ENCODE measurements at regions of chr1 and their contacts with region 1.

Region 1: DNA sequence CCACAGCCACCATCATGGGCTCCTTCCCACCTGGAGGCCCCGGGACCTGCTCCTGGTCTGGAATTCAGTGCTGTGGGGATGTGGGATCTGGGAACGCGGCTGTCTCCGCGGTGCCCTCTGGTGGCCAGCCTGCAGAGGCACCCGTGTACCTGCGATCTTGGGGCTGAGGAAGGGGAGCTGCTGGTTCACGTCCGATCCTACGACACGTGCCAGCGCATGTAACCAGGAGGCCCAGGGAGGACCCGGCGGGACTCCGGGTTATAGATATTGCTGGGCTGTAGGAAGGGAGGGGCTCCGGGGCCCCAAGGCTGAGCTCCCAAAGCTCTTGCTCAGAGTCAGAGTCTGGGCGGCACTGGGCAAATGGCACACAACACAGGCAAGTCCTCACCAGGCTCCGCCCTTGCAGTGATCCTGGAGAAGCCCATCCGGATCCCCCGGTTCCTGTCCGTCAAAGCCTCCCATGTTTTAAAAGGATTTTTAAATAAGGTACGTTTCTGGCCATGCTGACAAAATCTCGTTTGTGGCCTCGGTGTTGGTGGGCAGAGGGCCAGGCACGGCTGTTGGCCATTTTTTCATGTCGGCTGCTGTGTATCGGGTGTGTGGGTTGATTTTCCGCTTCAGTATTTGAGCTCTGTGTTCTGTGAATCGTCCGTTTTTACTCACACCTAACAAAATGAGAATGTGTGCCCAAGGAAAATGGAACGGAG is 20.1 kb downstream of the FAAP20 start:
- DNase-seq: peak; percentile 31
- ATAC-seq: peak; percentile 61
- H3K4me3 Mint-ChIP-seq: no peak overlapping the region
- H3K27ac Mint-ChIP-seq: no peak overlapping the region
- H3K4me1 Mint-ChIP-seq: peaks cover 1% of the 10 kb centered on the region
- H3K27me3 Mint-ChIP-seq: no peaks in the 10 kb centered on the region
- CTCF ChIP-seq: no peak

Region 2: DNA sequence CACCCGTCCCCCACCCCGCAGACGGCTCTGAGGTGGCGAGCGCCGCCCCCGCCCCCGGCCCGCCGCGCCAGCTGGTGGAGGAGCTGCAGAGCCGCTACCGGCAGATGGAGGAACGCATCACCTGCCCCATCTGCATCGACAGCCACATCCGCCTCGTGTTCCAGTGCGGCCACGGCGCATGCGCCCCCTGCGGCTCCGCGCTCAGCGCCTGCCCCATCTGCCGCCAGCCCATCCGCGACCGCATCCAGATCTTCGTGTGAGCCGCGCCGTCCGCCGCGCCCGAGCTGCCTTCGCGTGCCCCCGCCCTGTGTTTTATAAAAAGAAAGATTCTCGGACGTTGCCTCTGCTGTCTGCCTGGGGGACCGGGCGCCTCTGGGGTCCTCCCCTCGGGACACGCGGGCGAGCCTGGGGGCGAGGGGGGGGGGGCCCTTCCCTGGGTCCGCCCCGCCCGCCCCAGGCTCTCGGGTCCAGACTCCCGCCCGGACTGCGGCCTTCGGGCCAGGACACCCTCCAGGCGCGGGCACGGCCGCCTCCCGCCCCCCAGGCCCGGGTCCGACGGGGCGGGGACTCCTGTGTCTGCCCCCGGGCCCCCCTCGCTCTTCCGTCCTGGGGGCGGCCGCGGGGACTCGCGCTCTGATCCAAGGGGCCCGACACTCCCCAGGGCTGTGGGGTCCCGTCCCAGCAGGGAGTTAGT is 544.1 kb before region 1 on chr1:
- CTCF ChIA-PET with region 1: no interaction called
- POLR2A ChIA-PET with region 1: no interaction called
- intact Hi-C with region 1: no loop called
- DNase-seq: peak; percentile 90
- ATAC-seq: peak; percentile 80
- H3K4me3 Mint-ChIP-seq: peak overlapping the region; percentile 82
- H3K27ac Mint-ChIP-seq: peak overlapping the region; percentile 82
- H3K4me1 Mint-ChIP-seq: peaks cover 6% of the 10 kb centered on the region
- H3K27me3 Mint-ChIP-seq: peaks cover 4% of the 10 kb centered on the region
- CTCF ChIP-seq: no peak

Region 3: DNA sequence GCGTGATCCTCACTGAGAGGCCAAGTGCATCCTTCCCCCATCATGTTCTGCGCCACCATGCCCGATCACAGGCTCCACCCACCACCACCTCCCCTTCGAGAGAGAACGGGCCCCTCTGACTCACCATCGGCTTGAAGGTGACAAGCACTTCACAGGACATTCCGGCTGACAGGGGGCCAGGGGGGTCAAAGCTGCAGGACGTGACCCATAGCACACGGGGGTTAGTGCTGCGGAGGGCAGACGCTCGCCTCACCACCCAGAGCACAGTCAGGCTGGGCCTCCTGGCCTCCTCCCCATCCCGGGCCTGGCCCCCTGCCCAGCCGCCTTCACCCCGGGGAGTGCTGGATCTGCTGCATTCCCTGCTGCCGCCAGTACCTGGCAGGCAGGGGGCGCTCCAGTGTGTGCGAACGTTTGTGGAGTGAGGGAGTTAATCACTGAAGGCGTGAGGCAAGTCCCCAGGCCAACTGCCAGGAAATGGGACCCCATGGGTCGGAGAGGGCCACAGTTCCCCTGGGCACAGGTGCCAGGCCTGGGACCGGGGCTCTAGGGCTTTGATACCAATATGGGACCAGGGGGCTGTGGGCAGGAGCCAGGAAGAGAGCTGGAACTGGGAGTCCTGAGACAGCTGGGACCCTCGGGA is 214.5 kb before region 1 on chr1:
- CTCF ChIA-PET with region 1: no interaction called
- POLR2A ChIA-PET with region 1: no interaction called
- intact Hi-C with region 1: loop called (anchors 10 kb)
- DNase-seq: peak; percentile 34
- ATAC-seq: peak; percentile 31
- H3K4me3 Mint-ChIP-seq: no peak overlapping the region
- H3K27ac Mint-ChIP-seq: no peak overlapping the region
- H3K4me1 Mint-ChIP-seq: no peaks in the 10 kb centered on the region
- H3K27me3 Mint-ChIP-seq: peaks cover 30% of the 10 kb centered on the region
- CTCF ChIP-seq: no peak

Region 4: DNA sequence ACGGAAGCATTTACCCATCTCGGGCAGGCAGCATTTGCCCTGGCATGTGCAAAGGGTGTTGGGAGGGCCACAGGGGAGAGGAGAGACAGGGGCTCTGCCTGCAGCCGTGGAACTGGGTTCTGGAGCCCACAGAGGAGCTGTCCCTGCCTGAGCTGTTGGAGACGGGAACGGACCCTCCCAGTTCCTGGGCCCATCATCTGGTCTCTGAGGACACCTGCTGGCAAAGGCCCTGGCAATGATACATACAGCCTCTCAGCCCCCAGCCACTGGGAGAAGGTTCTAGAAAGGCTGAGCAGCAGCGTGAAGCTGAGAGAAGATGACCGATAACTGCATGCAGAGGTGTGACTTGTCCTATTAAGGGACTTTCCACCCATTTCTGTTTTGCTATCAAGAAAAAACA is 11.3 kb before region 1 on chr1:
- CTCF ChIA-PET with region 1: interaction called, 13 read pairs
- POLR2A ChIA-PET with region 1: no interaction called
- intact Hi-C with region 1: no loop called
- DNase-seq: no peak
- ATAC-seq: no peak
- H3K4me3 Mint-ChIP-seq: no peak overlapping the region
- H3K27ac Mint-ChIP-seq: no peak overlapping the region
- H3K4me1 Mint-ChIP-seq: no peaks in the 10 kb centered on the region
- H3K27me3 Mint-ChIP-seq: no peaks in the 10 kb centered on the region
- CTCF ChIP-seq: no peak

Region 5: DNA sequence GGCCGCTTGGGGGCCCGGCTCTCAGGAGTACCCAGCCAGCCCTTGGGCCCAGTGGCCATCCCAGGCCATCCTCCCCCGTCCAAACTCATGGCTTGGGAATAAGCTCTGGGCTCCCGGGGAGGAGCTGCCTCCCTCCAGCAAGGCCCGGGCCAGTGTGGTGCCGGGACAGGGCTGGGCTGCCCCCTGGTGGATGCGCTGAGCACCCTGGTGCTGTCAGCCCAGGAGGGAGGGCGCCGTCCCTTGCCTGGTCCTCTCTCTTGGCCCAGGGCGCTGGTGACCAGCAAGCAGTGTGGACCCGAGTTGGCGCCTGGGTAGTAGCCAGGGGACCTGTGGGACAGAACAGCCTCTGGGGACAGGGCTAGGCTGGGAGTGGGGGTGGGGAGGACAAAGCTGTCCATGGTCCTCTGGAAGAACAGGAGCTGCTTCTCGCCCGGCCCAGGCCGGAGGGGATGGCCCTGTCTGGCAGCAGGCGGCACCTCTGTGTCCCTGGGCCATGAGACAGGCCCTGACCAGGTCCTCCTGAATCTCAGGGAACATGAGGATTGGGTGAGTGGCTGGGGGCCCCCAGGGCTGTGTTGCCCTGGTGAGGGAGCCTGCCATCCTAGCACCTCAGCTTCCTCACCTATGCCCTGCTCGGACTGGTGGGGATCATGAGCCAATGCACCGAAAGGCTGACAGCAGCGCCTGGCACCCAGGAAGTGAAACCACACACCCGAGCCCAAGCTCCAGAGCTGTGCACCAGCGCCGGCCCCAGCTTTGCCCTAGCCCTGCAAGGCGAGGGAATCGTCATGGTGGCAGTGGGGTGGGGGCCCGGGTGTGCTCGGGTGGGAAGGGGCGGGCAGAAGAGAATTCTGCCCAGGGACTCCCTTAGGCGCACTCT is 207.5 kb after region 1 on chr1:
- CTCF ChIA-PET with region 1: interaction called, 11 read pairs
- POLR2A ChIA-PET with region 1: no interaction called
- intact Hi-C with region 1: no loop called
- DNase-seq: peak; percentile 74
- ATAC-seq: peak; percentile 85
- H3K4me3 Mint-ChIP-seq: no peak overlapping the region
- H3K27ac Mint-ChIP-seq: no peak overlapping the region
- H3K4me1 Mint-ChIP-seq: peaks cover 25% of the 10 kb centered on the region
- H3K27me3 Mint-ChIP-seq: no peaks in the 10 kb centered on the region
- CTCF ChIP-seq: peak; percentile 31

Measured in activated B cell treated with CpG ODN at 0.5 μM for 24 hours (primary cell).